Activated CD8-positive, alpha-beta T cell treated with anti-CD3 and anti-CD28 coated beads, Interleukin-2, amount 10 ng/mL, durations not matched to agents 7 days and 5 days (primary cell): ENCODE measurements at regions of chr6 and their contacts with region 1.

Region 1: DNA sequence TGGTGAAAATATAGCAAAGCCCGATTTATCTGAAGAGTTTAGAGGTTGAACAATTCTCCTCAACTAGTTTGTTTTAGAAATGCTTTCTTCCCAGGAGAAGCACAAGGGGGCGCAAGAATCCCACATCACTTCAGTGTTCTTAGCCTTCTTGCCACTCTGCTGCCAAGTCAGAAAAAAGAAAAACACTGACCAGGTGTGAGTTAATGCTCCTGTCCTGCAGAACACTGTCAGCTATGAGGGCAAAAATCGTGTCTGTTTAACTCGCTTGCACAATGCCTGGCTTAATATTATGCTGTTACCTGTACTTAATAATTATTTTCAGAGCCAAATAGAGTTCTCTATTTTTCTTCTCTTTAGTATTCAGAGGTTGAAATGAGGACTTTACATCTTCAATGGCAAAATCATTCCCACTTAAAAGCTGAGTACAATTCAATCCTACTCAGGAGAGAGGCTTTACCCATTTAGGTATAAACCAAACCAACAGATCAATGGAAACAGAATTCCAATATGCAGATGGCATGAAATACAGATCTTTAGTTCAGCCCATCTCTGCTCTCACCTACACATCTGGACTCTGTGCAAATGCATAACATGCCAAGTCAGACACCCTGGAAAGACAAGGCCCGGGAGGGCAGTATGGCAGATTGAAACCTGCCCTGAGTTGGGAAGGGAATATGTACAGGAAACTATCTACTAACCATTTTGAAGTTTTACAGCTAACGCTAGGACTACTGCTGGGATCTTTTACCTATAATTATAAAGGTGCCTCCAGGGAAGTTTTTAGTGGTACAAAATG is 71.4 kb upstream of the TULP1 start:
- DNase-seq: peak; percentile 87
- ATAC-seq: peak; percentile 78
- H3K4me3 Mint-ChIP-seq: no peak overlapping the region
- H3K27ac Mint-ChIP-seq: no peak overlapping the region
- H3K4me1 Mint-ChIP-seq: peaks cover 18% of the 10 kb centered on the region
- H3K27me3 Mint-ChIP-seq: no peaks in the 10 kb centered on the region

Region 2: DNA sequence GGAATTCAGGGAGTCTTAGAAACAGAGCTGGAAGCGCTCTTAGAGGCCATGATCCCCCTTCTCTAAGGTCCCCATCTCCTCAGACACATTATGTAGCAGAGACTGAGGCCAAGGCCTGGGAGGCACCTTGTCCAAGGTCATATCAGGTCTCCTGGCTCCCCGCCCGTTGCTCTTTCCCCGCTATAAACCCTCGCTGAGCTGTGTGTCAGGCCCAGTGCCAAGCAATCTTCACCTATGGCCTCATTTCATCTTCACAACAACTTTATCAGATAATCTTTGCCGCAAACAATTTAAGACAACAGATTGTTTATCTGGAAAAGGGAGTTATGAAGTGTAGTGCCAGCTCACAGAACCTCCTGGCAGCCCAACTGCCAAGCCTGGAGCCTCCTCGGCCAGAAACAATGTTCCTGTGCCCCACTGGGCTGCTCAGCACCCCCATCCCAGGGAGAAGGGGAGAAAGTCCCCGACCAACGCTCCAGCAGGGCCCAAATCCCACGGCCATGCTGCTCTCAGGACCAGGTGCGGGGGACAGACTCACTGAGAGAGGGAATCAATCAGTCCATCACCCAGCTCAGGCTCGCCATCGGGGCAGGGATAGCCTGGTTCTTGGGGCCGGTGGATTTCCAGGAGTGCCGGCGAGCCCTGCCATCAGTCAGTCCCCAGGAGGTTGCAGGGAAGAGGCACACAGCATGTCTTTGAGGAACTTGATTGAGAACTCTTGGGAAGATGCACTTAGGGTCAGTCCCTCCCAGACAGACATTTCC is 148.8 kb before region 1 on chr6:
- CTCF ChIA-PET with region 1: no interaction called
- POLR2A ChIA-PET with region 1: no interaction called
- DNase-seq: no peak
- ATAC-seq: no peak
- H3K4me3 Mint-ChIP-seq: no peak overlapping the region
- H3K27ac Mint-ChIP-seq: peak overlapping the region; percentile 25
- H3K4me1 Mint-ChIP-seq: no peaks in the 10 kb centered on the region
- H3K27me3 Mint-ChIP-seq: no peaks in the 10 kb centered on the region

Region 3: GRCh38 chr6:35552285-35552917 is 31.7 kb before region 1 on chr6:
- CTCF ChIA-PET with region 1: interaction called, 10 read pairs
- POLR2A ChIA-PET with region 1: no interaction called
- DNase-seq: peak; percentile 78
- ATAC-seq: peak; percentile 64
- H3K4me3 Mint-ChIP-seq: no peak overlapping the region
- H3K27ac Mint-ChIP-seq: no peak overlapping the region
- H3K4me1 Mint-ChIP-seq: peaks cover 8% of the 10 kb centered on the region
- H3K27me3 Mint-ChIP-seq: peaks cover 14% of the 10 kb centered on the region

Region 4: GRCh38 chr6:35601331-35602132 is 17.4 kb after region 1 on chr6:
- CTCF ChIA-PET with region 1: interaction called, 34 read pairs
- POLR2A ChIA-PET with region 1: no interaction called
- DNase-seq: peak; percentile 82
- ATAC-seq: peak; percentile 84
- H3K4me3 Mint-ChIP-seq: peak overlapping the region; percentile 64
- H3K27ac Mint-ChIP-seq: peak overlapping the region; percentile 86
- H3K4me1 Mint-ChIP-seq: peaks cover 67% of the 10 kb centered on the region
- H3K27me3 Mint-ChIP-seq: no peaks in the 10 kb centered on the region

Region 5: GRCh38 chr6:35669451-35670045 is 85.5 kb after region 1 on chr6:
- CTCF ChIA-PET with region 1: interaction called, 12 read pairs
- POLR2A ChIA-PET with region 1: interaction called, 3 read pairs
- DNase-seq: no peak
- ATAC-seq: peak; percentile 72
- H3K4me3 Mint-ChIP-seq: peak overlapping the region; percentile 71
- H3K27ac Mint-ChIP-seq: peak overlapping the region; percentile 72
- H3K4me1 Mint-ChIP-seq: peaks cover 59% of the 10 kb centered on the region
- H3K27me3 Mint-ChIP-seq: no peaks in the 10 kb centered on the region